ENCODE measurements at regions of chr12 and their contacts with region 1.

Region 1: GRCh38 chr12:40921563-40922163 is 229.4 kb downstream of the CNTN1 start:
- DNase-seq: no peak

Region 2: GRCh38 chr12:40622246-40622838 is 299.3 kb before region 1 on chr12:
- intact Hi-C with region 1: loop called (anchors 1 kb)
- DNase-seq: peak in 7 of 10 donors; percentile 59 to 85 (median 66)

Region 3: DNA sequence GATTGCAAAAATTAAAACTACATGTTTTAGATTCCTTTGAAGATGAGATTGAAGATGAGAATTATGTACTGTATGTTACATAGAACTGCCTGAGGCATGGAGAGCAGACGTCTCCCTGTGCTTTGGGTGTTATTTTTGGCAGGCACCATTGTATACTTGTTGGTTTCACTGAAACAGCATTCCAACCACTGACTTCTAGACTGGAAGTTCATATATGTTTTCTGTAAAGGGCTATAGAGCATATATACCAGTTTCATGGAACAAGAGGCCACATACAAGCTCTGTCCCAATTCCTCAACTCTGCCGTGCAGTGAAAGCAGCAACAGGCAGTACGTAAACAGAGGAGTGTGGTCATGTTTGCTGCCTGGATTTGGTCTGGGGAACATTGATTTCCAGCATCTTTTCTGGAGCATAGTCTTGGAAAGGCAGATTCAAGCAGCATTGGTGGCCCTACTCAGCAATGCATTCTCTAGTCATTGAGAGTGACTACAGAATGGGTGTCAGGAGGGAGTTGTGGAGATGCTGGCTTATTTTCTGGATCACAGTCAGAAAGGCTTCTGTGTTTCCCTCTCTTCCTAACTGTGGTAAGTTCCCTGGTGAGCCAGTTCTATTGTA is 287.0 kb before region 1 on chr12:
- intact Hi-C with region 1: loop called (anchors 2 kb)
- DNase-seq: no peak

Measured in posterior cingulate gyrus (tissue), 11 donors.